A673 (cell line): ENCODE measurements at regions of chr19 and their contacts with region 1.

Region 1: GRCh38 chr19:46404055-46404752 is 9.2 kb downstream of the CCDC8 start:
- DNase-seq: peak; percentile 71
- H3K4me3 ChIP-seq: peak overlapping the region; percentile 37
- H3K27ac ChIP-seq: peak overlapping the region; percentile 15
- H3K4me1 ChIP-seq: peaks cover 20% of the 10 kb centered on the region
- H3K27me3 ChIP-seq: no peaks in the 10 kb centered on the region
- CTCF ChIP-seq: peak; percentile 45; the same call in 1 of the 2 replicates

Region 2: DNA sequence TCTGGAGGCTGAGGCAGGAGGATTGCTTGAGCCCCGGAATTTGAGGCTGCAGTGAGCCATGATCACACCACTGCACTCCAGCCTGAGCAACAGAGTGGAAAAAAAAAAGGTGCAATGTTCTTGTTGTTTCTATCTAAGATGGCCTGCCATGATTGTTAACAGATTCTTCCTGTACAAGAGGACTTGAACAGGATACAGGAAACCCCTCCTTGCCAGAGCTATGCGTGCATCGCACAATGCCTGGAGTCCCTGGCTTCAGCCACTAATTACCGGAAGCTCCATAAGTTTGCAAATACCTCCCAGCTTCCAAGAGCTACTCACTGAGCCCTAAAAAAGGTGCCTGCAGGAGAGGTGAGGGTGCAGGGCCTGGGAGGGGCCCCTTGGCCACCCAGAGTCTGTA is 120.4 kb before region 1 on chr19:
- CTCF ChIA-PET with region 1: interaction called, 3 read pairs
- POLR2A ChIA-PET with region 1: no interaction called
- intact Hi-C with region 1: loop called (anchors 5 kb)
- DNase-seq: peak; percentile 47
- H3K4me3 ChIP-seq: no peak overlapping the region
- H3K27ac ChIP-seq: no peak overlapping the region
- H3K4me1 ChIP-seq: no peaks in the 10 kb centered on the region
- H3K27me3 ChIP-seq: no peaks in the 10 kb centered on the region
- CTCF ChIP-seq: no peak

Region 3: DNA sequence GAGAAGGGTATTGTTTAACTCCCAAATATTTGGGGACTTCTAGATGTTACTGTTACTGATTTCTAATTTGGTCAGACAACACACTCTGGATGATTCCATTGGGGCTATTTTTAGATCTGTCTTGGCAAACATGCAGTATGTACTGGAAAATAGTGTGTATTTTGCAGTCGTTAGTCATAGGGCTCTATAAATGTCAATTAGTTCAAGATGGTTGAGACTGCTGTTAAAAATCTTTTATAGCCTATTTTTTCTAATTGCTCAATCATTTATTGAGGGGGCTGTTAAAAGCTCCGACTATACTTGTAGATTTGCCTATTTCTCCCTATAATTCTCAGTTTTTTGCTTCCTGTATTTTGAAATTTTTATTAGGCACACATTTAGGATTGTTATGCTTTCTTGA is 25.9 kb before region 1 on chr19:
- CTCF ChIA-PET with region 1: no interaction called
- POLR2A ChIA-PET with region 1: no interaction called
- intact Hi-C with region 1: no loop called
- DNase-seq: peak; percentile 30
- H3K4me3 ChIP-seq: no peak overlapping the region
- H3K27ac ChIP-seq: no peak overlapping the region
- H3K4me1 ChIP-seq: peaks cover 32% of the 10 kb centered on the region
- H3K27me3 ChIP-seq: no peaks in the 10 kb centered on the region
- CTCF ChIP-seq: no peak

Region 4: DNA sequence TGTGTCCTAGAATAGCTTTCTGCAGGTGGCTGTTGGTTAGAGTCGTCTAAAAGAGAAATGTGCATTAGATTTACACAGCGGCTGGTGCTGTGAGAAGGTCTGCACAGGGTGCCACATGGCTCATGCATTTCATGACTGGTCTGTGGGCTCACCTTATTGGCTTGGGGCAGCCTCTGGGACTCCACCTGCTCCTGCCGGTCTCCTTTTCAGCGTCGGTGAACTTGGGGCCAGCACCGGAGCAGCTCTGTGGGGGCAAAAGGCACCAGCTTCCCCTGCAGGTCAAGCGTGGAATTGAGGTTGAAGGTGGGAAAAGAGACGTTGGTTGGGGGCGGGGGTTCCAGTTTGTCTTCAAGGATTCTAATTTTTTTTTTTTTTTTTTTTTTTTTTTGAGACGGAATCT is 27.6 kb after region 1 on chr19:
- CTCF ChIA-PET with region 1: interaction called, 10 read pairs
- POLR2A ChIA-PET with region 1: no interaction called
- intact Hi-C with region 1: no loop called
- DNase-seq: no peak
- H3K4me3 ChIP-seq: no peak overlapping the region
- H3K27ac ChIP-seq: no peak overlapping the region
- H3K4me1 ChIP-seq: no peaks in the 10 kb centered on the region
- H3K27me3 ChIP-seq: no peaks in the 10 kb centered on the region
- CTCF ChIP-seq: peak; percentile 38

Region 5: DNA sequence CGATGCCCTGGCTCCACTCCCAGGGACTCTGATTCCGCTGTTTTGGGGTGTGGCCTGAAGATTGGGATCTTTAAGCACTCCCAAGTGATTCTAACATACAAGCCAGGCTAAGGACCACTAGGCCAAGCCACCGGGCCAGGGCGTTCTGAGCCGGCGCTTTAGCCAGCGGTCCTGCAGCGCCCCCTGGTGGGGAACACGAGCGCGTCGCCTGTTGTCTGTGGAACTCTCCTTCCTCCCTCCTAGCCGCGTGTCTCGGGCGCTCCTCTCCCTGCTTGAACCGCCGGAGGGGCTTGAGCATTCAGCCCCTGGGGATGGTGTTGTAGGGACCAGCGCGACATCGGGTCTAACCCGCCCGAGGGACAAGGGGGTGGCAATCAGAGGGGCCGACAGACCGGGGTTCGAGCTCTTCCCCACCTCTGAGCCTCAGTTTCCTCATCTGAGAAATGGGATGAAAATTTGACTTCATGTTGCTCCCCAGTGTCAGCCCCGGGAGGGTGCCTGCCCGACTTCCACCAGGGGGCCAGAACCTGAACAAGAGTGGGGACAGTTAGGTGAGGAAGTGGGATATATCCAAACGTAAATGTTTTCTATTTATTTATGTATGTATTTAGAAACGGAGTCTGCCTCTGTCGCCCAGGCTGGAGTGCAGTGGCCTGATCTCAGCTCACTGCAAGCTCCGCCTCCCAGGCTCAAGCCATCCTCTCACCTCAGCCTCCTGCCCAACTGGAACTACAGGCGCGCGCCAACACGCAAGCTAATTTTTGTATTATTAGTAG is 109.4 kb after region 1 on chr19:
- CTCF ChIA-PET with region 1: interaction called, 5 read pairs
- POLR2A ChIA-PET with region 1: no interaction called
- intact Hi-C with region 1: loop called (anchors 2 kb)
- DNase-seq: peak; percentile 86
- H3K4me3 ChIP-seq: no peak overlapping the region
- H3K27ac ChIP-seq: no peak overlapping the region
- H3K4me1 ChIP-seq: no peaks in the 10 kb centered on the region
- H3K27me3 ChIP-seq: no peaks in the 10 kb centered on the region
- CTCF ChIP-seq: peak; percentile 97

Region 6: DNA sequence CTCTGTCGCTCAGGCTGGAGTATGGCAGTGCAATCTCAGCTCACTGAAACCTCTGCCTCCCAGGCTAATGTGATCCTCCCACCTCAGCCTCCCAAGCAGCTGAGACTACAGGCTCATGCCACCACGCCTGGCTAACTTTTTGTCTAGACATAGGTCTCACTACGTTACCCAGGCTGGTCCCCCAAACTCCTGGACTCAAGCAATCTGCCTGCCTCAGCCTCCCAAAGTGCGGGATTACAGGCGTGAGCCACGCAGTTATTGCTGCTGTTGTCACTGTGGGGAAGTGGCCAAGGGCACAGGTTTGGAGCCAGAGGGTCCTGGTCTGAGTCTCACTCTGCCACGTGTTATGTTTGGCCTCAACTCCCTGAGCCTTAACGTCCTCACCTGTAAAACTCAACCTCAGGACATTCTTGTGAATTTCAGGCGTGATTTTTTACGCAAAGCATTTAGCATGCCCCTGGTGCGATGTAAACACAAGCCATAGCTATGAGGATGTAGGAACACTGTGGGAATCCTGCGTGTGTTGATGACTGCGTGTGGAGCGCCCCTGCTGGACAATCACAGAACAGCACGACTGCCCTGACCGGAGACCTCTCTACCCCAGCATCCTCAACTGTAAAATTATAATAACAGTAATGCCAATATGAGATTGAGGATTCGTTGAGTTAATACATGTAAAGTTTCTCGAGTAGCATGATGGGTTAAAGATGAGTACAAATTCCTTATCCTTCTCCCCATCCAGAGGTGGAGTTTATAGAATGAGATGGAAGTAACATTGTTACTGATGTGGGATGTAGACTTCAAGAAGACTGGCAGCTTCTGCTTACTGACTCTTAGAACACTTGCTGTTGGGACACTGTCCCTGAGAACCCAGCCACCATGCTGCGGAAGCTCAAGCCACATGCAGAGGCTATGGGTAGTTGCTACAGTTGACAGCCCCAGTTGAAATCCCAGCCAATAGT is 133.2 kb after region 1 on chr19:
- CTCF ChIA-PET with region 1: no interaction called
- POLR2A ChIA-PET with region 1: no interaction called
- intact Hi-C with region 1: no loop called
- DNase-seq: peak; percentile 50
- H3K4me3 ChIP-seq: no peak overlapping the region
- H3K27ac ChIP-seq: no peak overlapping the region
- H3K4me1 ChIP-seq: no peaks in the 10 kb centered on the region
- H3K27me3 ChIP-seq: no peaks in the 10 kb centered on the region
- CTCF ChIP-seq: peak; percentile 95